Posterior vena cava (tissue), 2 donors: ENCODE measurements at regions of chr7 and their contacts with region 1.

Region 1: DNA sequence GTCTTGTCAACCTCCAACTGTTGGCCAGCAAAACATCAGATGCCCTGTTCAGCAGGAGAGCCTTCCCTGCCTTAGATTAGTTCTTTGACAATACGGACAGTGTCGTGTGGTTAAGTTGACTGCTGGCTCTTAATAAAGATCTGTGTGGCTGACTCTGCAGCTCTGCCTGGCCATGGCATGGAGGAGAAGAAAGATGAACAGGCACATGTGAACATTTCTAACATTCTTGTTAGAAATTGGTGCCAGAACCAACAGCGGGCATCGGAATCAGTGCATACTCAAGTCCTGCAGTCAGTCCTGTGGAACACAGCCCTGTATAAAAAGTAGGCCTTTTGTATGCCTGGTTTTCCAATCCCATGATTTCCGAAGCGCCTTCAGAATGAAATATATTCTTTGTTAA is 455.6 kb downstream of the POM121L12 start:
- DNase-seq: no peak

Region 2: GRCh38 chr7:52455571-52455970 is 1035.5 kb before region 1 on chr7:
- intact Hi-C with region 1: loop called in 1 of 2 experiments (anchors 5 kb)
- DNase-seq: no peak